Brain microvascular endothelial cell (primary cell): ENCODE measurements at regions of chr10 and their contacts with region 1.

Region 1: GRCh38 chr10:114694752-114695151 is 36.7 kb upstream of the ABLIM1 start:
- DNase-seq: no peak
- H3K4me3 ChIP-seq: no peak overlapping the region
- H3K27ac ChIP-seq: no peak overlapping the region
- H3K27me3 ChIP-seq: no peaks in the 10 kb centered on the region
- CTCF ChIP-seq: peak; percentile 81

Region 2: DNA sequence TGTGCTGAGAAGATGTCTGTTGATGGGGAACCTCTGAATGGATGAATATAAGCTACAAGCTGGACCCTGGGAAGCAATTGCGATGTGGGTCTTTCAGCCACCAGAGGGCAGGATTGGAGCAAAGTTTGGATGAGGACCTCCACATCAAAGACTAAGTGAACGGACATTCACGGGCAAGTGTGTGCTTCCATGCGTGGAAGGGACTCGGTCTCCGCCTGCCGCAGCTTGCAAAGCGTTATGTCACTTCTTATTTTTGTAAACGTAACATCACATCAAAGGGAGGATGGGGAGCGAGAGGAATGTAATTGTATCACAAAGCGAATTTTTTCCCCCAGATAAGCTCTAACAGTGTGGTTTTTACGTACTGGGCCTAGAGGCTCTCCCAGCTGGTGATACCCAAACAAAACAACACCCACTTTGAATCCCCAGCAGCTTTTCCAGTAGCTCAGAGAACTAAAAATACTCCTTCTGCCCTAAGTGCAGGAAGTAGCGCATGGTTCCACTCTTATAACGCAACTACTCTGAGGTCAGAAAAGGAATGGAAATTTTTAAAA is 390.7 kb before region 1 on chr10:
- in situ Hi-C with region 1: loop called (anchors 25 kb)
- DNase-seq: peak; percentile 94
- H3K4me3 ChIP-seq: peak overlapping the region; percentile 41
- H3K27ac ChIP-seq: peak overlapping the region; percentile 8
- H3K27me3 ChIP-seq: no peaks in the 10 kb centered on the region
- CTCF ChIP-seq: peak; percentile 87

Region 3: DNA sequence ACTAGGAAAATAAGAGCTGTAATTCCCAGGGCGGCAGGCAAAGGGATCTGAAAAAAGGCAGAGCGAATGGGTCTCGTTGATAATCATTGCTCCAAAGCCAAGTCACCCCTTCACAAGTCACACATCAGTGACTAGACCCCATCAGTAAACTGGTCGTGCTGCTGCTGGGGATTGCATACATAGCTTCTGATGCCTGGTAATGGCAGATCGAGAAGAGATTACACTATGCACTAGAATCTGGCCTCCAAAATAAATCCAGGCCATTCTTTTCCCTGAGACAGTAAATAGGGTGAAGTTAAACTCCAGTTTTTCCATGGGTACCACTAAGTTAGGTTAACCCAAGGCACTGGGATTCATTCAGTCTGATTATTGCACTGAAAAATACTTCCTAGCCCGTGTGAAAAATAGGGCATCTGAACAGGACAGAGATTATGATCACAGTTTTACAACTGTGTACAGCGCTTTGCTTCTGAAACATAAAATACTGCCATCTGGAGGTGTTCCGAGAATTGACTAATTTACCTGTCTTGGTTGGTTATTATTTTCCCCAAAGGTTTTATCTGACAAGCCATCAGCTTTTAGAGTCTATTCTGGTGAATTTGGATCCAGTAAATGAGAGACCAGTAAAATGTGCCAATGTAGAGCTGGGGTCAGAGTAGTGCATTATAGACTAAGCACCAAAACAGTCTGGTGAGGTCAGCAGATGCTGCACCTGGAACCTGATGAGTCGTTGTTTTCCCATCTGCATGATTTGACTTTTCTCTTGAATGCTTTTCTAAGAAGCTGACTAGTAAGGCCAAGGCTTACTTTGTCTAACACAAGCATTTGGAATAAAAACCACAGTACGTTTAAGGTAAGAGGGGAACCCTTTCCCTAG is 207.6 kb before region 1 on chr10:
- in situ Hi-C with region 1: loop called (anchors 10 kb)
- DNase-seq: no peak
- H3K4me3 ChIP-seq: no peak overlapping the region
- H3K27ac ChIP-seq: no peak overlapping the region
- H3K27me3 ChIP-seq: no peaks in the 10 kb centered on the region
- CTCF ChIP-seq: no peak

Region 4: DNA sequence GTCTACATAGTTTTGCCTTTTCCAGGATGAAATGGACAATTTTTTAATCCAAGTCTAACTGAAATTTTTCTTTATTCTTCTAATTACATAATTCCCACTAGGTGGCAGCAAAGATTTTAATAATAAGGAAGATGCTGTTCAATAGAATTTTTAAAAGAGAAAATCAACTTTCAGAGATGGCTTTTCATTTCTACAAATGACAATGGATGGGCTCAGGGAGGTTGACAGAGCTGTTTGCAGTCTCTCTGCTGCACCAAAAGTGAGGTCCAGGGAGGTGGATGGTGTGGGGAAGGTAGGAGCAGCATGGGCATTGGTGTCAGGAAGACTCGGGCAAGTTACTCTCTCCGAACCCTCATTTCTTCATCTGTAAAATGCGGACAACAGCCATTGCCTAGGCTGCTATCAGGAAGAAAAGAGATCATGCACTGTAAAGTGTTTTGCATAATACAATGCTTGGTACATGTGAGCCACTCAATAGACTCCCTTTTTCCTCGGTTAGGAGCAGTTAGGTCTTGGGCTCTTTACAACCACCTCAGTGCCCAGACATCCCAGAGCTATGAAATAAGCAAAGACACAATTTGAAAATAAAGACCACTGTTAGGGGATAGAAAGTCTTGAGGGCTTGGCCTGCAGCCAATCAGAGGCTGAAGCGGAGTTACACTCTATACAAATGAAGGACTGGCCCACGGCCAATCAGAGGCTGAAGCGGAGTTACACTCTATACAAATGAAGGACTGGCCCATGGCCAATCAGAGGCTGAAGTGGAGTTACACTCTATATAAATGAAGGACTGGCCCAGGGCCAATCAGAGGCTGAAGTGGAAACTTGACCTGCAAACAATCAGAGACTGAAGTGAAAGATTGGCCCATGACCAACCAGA is 143.8 kb before region 1 on chr10:
- in situ Hi-C with region 1: loop called (anchors 5 kb)
- DNase-seq: no peak
- H3K4me3 ChIP-seq: peak overlapping the region; percentile 23
- H3K27ac ChIP-seq: no peak overlapping the region
- H3K27me3 ChIP-seq: no peaks in the 10 kb centered on the region
- CTCF ChIP-seq: peak; percentile 9

Region 5: DNA sequence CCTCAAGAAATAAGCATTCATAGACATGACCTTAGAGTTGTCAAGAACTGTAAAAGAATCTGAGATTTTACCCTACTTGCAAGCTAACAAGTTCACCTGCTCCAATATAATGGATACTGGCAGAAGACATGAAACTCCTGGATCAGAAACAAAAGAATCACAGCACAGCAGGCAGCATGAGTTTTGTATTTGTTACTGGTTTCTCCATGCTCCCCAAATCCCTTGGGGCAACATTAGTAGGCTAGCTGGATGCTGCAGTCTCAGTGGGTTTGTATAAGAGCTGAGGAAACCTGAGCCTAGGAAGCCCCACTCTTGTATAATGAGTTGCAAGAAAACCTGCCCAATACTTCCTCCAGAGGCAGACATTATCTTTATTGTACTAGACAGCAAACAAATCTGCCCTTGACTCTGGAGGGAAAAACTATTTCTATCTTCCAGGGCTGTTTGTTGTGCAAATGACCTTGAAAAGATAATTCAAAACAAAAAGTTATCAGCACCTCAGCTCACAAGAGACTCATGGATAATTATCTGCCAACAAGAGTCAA is 101.4 kb before region 1 on chr10:
- in situ Hi-C with region 1: no loop called
- DNase-seq: no peak
- H3K4me3 ChIP-seq: no peak overlapping the region
- H3K27ac ChIP-seq: no peak overlapping the region
- H3K27me3 ChIP-seq: no peaks in the 10 kb centered on the region
- CTCF ChIP-seq: no peak

Region 6: GRCh38 chr10:114779803-114780609 is 85.3 kb after region 1 on chr10:
- in situ Hi-C with region 1: loop called (anchors 25 kb)
- DNase-seq: peak; percentile 72
- H3K4me3 ChIP-seq: no peak overlapping the region
- H3K27ac ChIP-seq: peak overlapping the region; percentile 54
- H3K27me3 ChIP-seq: no peaks in the 10 kb centered on the region
- CTCF ChIP-seq: no peak

Region 7: DNA sequence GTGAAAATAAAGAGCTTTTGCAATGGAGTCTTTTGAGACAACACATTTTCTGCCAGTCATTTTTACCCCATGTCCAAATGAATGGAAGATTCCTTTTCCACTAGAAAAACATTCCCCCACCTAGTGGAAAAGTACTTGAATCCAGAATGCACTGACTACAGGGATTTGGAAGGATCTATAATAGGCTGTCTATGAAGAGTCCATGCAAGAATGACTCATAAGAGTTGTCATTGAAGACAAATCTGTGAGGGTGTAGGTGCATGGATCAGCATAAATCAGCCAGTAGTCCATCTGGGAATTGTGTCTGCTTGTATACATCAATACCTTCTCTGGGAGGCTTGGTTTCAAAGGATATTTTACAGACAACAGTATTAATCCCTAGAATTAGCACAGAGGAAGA is 210.7 kb after region 1 on chr10:
- in situ Hi-C with region 1: no loop called
- DNase-seq: peak; percentile 25
- H3K4me3 ChIP-seq: no peak overlapping the region
- H3K27ac ChIP-seq: no peak overlapping the region
- H3K27me3 ChIP-seq: no peaks in the 10 kb centered on the region
- CTCF ChIP-seq: no peak

Region 8: DNA sequence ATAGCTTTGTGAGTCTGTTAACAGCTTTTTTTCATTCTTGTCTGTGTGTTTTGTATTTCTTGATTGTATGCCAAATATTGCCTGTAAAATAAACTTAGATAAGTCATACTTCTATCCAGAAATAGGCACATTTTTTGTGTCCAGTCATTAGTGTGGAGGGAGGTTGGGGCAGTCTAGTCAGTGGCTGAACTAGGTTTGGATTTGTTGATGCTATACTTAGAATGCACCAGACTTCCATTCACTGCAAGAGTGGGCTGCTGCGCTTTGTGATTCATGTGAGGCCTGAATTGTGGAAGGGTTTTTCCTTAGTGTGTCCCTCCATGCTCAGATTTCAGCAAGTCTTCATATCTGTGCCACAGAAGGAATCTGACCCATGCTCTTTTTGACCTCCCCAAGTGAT is 293.2 kb after region 1 on chr10:
- in situ Hi-C with region 1: no loop called
- DNase-seq: peak; percentile 93
- H3K4me3 ChIP-seq: no peak overlapping the region
- H3K27ac ChIP-seq: peak overlapping the region; percentile 25
- H3K27me3 ChIP-seq: no peaks in the 10 kb centered on the region
- CTCF ChIP-seq: no peak